ENCODE measurements at regions of chr7 and their contacts with region 1.

Region 1: DNA sequence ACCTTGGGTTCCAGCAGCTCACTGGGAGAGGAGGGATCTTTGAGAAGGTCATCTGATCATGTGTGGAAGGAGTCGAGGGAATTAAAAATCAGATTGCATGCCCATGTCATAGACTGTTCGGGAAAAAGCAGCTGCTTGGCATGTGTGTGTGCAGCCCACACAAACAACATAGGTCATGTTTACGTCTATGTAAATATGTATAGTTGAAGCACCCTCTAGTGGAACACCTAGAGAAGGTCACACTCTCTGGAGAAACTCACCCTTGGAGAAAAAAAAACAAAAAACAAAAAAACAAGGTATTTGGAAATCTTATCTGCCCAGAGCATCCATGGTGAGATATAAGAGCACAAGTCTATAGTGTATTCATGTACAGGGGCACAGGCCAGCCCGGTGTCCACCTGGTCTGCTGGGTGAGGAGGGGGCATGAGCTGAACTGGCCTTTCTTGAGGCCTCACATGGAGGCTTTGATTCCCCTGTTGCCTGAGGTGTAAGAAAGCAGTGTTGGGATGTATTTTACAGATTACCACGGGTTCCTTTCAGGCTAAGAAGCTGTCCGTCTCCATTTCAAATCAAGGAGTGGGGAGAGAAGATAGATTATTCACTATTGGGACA is 98.0 kb downstream of the NPY start:
- DNase-seq: peak; percentile 12
- H3K4me3 ChIP-seq: no peak overlapping the region
- H3K27ac ChIP-seq: no peak overlapping the region
- H3K4me1 ChIP-seq: peaks cover 16% of the 10 kb centered on the region
- H3K27me3 ChIP-seq: no peaks in the 10 kb centered on the region
- CTCF ChIP-seq: peak; percentile 61 to 68

Region 2: DNA sequence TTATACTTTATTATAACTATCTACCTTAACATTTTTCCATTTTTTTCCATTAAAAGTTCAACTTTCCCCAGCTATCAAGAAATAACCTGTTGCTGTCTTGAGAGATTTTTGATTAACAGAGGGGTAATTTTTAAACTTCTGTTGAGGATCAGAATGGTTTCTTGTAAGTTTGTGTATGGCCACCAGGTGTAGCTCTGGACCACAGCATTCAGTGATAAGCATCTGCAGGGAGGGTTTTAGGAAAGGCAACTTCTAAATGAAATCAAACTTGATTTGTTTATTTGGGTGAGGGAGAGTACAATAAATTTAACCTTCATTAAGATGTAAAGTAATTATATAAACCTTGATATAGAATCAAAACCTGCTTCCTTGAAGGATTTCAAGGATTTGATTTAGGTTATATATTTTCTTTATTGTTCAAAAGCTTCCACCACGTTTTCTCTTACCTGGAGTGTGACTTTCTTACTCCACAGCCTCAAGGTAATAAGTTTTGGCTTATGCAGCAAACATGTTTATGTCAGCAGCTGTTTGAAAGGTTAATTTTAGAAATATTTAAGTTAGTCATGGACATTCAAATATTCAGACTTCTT is 518.7 kb before region 1 on chr7:
- CTCF ChIA-PET with region 1: interaction called, 4 read pairs
- dilution Hi-C with region 1: no loop called
- in situ Hi-C with region 1: loop called (anchors 10 kb)
- intact Hi-C with region 1: loop called (anchors 1 kb)
- DNase-seq: peak; percentile 20
- H3K4me3 ChIP-seq: no peak overlapping the region
- H3K27ac ChIP-seq: no peak overlapping the region
- H3K4me1 ChIP-seq: no peaks in the 10 kb centered on the region
- H3K27me3 ChIP-seq: no peaks in the 10 kb centered on the region
- CTCF ChIP-seq: peak; percentile 73 to 94

Region 3: DNA sequence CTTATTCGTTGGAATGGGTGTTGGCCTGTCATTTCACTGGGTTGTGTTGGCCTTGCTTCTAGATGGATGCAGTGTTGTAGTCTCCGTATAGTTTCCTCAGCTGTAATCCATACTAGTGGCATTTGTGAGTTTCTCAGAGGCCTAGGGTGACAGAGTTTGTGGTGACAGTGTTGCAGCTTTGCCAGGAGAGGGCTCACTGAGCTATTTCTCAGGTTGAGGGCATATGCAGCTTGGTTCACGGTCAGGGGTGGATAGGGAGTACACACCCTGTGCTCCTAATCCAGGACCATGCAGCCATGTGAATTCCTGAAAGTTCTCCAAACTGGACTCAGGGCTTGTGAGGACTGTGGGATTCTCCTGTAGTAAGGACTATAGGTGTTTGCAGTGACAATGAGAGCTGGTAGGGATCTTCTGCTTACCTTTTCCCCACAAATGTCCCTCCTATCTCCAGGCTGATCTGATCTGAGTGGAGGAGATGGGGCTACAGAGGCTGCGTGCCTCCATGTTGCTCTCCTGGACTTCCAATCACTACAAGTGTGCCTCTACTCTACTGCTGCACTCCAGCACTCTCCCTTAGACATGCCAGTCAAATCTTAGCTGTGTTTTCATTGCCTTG is 443.0 kb before region 1 on chr7:
- CTCF ChIA-PET with region 1: interaction called, 5 read pairs
- dilution Hi-C with region 1: no loop called
- in situ Hi-C with region 1: no loop called
- intact Hi-C with region 1: loop called (anchors 1 kb)
- DNase-seq: peak; percentile 50
- H3K4me3 ChIP-seq: no peak overlapping the region
- H3K27ac ChIP-seq: no peak overlapping the region
- H3K4me1 ChIP-seq: no peaks in the 10 kb centered on the region
- H3K27me3 ChIP-seq: no peaks in the 10 kb centered on the region
- CTCF ChIP-seq: peak; percentile 66 to 85

Region 4: DNA sequence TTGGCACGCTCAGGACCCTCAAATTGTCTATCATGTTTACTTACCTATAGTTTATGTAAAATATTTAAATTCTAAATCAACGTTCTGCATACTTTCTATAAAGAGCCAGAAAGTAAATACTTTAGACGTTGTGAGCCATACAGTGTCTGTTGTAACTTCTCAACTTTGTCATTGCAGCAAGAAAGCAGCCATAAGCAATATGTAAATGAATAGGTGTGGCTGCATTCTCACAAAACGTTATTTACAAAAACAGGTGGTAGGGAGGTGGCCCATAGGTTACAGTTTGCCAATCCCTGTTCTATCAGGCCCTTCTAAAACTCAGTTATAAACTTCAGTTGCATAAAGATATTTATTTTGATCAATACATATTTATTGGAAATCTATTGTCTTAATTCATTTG is 110.1 kb before region 1 on chr7:
- CTCF ChIA-PET with region 1: no interaction called
- dilution Hi-C with region 1: no loop called
- in situ Hi-C with region 1: no loop called
- intact Hi-C with region 1: no loop called
- DNase-seq: no peak
- H3K4me3 ChIP-seq: no peak overlapping the region
- H3K27ac ChIP-seq: no peak overlapping the region
- H3K4me1 ChIP-seq: no peaks in the 10 kb centered on the region
- H3K27me3 ChIP-seq: peaks cover 4% of the 10 kb centered on the region
- CTCF ChIP-seq: no peak

Region 5: DNA sequence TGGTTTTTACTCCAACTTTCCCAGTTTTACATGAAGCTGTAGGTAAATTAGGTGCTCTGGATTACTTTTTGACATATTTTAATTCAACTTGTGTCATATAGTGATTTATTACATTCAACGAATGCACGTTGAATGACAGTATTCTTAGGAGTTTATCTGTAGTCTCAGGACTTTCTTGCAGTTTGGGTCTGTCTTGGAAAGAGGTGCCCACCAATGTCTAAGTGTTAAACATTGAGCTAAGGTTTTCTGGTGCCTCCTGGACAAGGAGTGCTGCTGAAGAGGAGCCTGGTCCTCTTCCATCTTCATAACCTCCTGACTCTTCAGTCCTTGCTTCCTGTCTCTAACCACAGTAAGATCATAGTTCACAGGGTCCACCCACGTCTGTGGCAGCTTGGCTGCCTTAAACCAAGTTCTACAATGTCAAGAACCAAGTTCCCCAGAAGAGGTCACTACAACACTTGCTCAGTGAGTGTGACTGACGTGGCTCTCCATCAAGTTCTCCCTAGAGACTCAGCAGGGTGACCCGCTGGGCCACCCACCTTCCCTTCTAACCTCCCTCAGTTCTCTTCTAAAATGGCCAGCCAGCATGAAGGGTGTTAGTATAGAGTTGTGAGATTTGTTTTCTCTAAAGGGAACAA is 91.9 kb before region 1 on chr7:
- CTCF ChIA-PET with region 1: interaction called, 5 read pairs
- dilution Hi-C with region 1: no loop called
- in situ Hi-C with region 1: no loop called
- intact Hi-C with region 1: loop called (anchors 1 kb)
- DNase-seq: peak; percentile 48
- H3K4me3 ChIP-seq: no peak overlapping the region
- H3K27ac ChIP-seq: no peak overlapping the region
- H3K4me1 ChIP-seq: peaks cover 5% of the 10 kb centered on the region
- H3K27me3 ChIP-seq: peaks cover 14% of the 10 kb centered on the region
- CTCF ChIP-seq: peak; percentile 10 to 54

Region 6: GRCh38 chr7:24318326-24318725 is 63.7 kb before region 1 on chr7:
- CTCF ChIA-PET with region 1: interaction called, 26 read pairs
- dilution Hi-C with region 1: no loop called
- in situ Hi-C with region 1: no loop called
- intact Hi-C with region 1: loop called (anchors 1 kb)
- DNase-seq: no peak
- H3K4me3 ChIP-seq: no peak overlapping the region
- H3K27ac ChIP-seq: no peak overlapping the region
- H3K4me1 ChIP-seq: no peaks in the 10 kb centered on the region
- H3K27me3 ChIP-seq: no peaks in the 10 kb centered on the region
- CTCF ChIP-seq: peak; percentile 51 to 71

Region 7: DNA sequence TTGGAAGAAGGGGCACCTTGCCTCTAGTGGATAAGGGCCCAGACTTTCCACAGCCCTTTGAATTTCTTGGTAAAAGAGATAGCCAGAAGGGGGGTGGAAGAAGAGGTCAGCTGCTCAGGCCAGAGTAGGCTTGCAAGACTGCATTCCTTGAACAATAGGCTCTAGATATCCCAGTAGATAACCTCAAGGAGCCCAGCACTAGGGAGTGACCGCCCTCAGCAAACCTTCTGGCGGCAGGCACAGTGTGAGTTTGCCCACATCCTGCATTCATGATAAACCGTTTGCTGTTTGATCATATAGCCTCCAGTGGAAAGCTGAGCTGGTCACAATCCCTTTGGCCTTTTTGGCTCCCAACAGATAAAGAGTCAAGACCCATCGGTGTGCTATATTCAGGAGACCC is 27.5 kb before region 1 on chr7:
- CTCF ChIA-PET with region 1: no interaction called
- dilution Hi-C with region 1: no loop called
- in situ Hi-C with region 1: no loop called
- intact Hi-C with region 1: no loop called
- DNase-seq: no peak
- H3K4me3 ChIP-seq: no peak overlapping the region
- H3K27ac ChIP-seq: no peak overlapping the region
- H3K4me1 ChIP-seq: no peaks in the 10 kb centered on the region
- H3K27me3 ChIP-seq: peaks cover 1% of the 10 kb centered on the region
- CTCF ChIP-seq: no peak

Region 8: DNA sequence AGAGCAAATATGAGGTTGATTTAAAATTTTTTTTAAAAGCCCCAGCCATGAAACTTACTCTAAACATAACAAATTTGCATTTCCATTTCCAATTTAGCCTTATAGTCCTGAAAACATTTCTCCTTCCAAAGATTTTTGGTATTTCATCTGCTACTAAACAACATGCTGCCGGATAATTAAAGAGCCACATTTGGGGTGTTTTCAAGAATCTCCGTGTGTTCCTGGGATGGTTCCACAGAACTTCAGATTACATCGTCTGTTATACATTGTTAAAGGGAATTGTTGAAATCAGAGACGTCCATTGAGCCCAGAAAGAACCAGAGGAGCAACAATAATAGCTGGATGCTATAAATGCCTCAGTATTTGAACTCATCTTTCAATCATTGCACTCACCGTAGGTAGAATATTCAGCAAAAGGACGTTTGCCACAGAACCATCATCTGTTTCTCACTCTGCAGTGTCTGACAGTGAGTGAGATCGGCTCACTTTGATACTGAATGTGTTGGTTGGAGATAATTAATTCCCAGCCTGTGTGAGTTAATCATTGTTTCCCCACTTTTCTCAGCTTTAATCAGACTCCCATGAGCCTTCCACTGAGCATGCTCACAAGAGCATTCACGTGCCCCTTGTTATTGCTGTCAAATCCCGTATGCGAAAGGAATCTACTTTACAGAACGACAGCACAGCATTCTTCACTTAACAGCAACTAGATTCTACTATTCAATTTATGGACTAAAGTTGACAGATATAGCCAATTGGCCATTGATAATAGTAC is 62.9 kb after region 1 on chr7:
- CTCF ChIA-PET with region 1: no interaction called
- dilution Hi-C with region 1: no loop called
- in situ Hi-C with region 1: no loop called
- intact Hi-C with region 1: no loop called
- DNase-seq: no peak
- H3K4me3 ChIP-seq: no peak overlapping the region
- H3K27ac ChIP-seq: no peak overlapping the region
- H3K4me1 ChIP-seq: peaks cover 4% of the 10 kb centered on the region
- H3K27me3 ChIP-seq: no peaks in the 10 kb centered on the region
- CTCF ChIP-seq: no peak

Region 9: DNA sequence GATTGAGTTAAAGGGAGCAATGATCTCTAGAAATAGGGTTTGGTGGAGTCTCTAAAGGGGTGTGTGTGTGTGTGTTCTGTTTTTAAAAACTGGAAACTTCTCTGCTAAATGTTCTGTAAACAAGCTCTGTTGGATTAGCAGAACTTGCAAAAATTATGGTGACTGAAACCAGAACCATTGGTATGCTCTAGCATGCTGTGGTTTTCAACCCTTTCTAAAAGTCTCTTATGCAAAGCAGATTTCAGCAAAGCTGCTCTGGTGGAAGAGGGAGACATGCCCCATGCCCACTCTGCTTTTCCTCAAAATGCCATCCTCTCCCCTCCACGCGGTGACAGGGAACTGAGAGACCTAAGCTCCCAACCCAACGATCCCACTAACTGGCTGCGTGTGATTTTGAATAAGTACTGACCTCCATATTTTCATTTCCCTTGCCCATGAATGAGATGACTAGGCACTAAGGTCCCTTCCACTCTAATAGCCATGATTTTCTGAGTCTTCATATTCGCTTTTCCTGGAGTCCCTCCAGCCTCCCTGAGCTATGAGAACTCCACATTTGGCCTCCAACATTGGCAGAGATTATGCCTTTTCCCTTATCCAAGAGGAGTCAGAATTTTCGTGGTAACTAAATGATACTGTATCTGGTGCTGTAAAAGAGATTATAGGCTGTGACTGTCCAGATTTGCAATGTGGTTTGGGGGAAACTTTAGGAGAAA is 74.0 kb after region 1 on chr7:
- CTCF ChIA-PET with region 1: no interaction called
- dilution Hi-C with region 1: loop called (anchors 5 kb)
- in situ Hi-C with region 1: no loop called
- intact Hi-C with region 1: no loop called
- DNase-seq: no peak
- H3K4me3 ChIP-seq: no peak overlapping the region
- H3K27ac ChIP-seq: no peak overlapping the region
- H3K4me1 ChIP-seq: no peaks in the 10 kb centered on the region
- H3K27me3 ChIP-seq: no peaks in the 10 kb centered on the region
- CTCF ChIP-seq: no peak